ENCODE measurements at regions of chr11 and their contacts with region 1.

Region 1: GRCh38 chr11:68206187-68206601 is 6.9 kb downstream of the KMT5B start:
- DNase-seq: peak; percentile 73
- H3K4me3 Mint-ChIP-seq: no peak overlapping the region
- H3K27ac Mint-ChIP-seq: no peak overlapping the region
- H3K4me1 Mint-ChIP-seq: peaks cover 39% of the 10 kb centered on the region
- H3K27me3 Mint-ChIP-seq: no peaks in the 10 kb centered on the region
- CTCF ChIP-seq: peak; percentile 56

Region 2: DNA sequence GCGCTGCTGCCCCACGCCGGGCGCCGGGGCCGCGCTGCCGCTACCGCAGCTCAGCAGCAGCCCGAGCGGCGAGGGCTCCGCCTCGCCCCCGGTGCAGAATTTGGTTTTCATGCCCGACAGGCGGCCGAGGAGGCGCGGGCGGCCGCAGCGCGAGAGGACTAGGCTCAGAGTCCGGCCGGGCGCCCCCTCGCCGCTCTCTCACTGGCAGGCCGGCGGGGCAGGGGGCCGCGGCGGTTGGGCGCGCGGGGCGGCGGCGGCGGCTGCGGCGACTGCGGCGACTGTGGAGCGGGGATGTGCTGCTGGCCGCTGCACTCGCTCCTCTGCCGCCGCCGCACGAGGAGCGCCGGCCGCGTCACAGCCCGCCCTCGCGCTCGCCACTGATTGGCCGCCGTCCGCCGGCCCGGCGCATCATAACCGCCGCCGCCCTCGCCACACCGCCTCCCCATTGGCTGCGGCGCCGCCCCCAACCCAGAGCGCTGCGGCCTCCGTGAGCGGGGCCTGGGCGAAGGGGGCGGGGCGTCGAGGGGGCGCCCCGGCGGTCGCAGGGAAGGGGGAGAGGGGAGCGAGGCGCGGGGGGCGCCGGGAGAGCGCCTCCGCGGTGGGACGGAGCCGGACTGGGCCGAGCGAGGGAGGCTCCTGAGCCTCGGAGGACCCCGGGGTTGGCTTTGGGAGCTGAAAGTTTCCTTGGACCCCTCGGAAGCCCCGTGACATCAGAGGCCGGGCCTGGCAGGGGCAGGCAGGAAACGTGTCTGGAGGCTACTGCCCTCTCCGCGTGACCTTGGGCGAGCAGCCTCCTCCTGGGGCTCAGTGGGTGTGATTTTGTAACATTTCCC is 84.9 kb before region 1 on chr11 and contains the start of gene CHKA:
- CTCF ChIA-PET with region 1: interaction called, 3 read pairs
- POLR2A ChIA-PET with region 1: no interaction called
- intact Hi-C with region 1: loop called (anchors 10 kb)
- DNase-seq: peak; percentile 87
- H3K4me3 Mint-ChIP-seq: peak within 1 kb of the TSS; percentile 75
- H3K27ac Mint-ChIP-seq: peak within 1 kb of the TSS; percentile 59
- H3K4me1 Mint-ChIP-seq: peaks cover 11% of the 10 kb centered on the region
- H3K27me3 Mint-ChIP-seq: no peaks in the 10 kb centered on the region
- CTCF ChIP-seq: no peak
- total RNA-seq, gene CHKA: 7.8 and 13.7 TPM in 2 replicates

Region 3: GRCh38 chr11:68447015-68447801 is 241.0 kb after region 1 on chr11:
- CTCF ChIA-PET with region 1: no interaction called
- POLR2A ChIA-PET with region 1: no interaction called
- intact Hi-C with region 1: loop called (anchors 5 kb)
- DNase-seq: peak; percentile 67
- H3K4me3 Mint-ChIP-seq: no peak overlapping the region
- H3K27ac Mint-ChIP-seq: no peak overlapping the region
- H3K4me1 Mint-ChIP-seq: no peaks in the 10 kb centered on the region
- H3K27me3 Mint-ChIP-seq: no peaks in the 10 kb centered on the region
- CTCF ChIP-seq: peak; percentile 95